Heart left ventricle (tissue), 16 donors: ENCODE measurements at regions of chr20 and their contacts with region 1.

Region 1: DNA sequence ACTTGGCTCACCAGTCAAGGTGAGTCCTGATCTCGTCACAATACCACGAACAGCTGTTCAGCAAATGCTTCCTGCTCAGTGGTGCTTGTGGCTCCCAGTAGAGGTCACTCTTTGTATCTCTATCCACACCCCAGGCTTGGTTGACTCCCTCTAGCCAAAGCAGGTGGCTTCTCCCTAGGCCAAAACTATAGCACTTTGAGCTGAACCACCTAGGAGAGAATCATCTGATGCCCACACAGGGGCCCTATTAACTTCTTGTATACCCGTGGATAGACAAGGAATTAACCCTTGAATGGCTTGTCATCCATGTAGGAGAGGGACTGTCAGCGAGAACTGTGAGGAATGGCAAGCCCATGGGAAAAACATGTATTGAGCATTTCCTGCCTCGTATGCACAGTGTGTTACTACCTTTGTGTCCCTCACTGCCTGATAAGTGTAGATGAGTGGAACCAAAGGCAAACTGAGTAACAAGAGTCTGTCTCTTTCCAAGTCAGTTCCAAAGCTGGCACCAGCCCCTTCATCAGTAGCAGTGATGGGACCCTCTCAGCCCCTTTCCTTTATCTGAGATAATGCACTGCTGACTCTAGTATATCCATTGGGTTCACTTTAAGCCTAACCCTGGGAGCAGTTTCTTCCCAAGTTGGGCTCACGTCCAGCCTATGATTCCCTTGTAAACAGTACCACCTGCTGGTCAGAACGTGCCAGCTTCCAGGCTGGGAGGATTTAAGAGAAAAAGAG is 42.5 kb downstream of the EIF2S2 start:
- DNase-seq: peak; percentile 50 to 74 (median 71)
- ATAC-seq: peak; percentile 72 to 91 (median 86)
- H3K4me3 ChIP-seq: no peak overlapping the region
- H3K27ac ChIP-seq: peak overlapping the region in 1 of 12 donors; percentile 7
- H3K4me1 ChIP-seq: peaks cover 0 to 50% (median 28%) of the 10 kb centered on the region in 12 donors
- H3K27me3 ChIP-seq: no peaks in the 10 kb centered on the region
- CTCF ChIP-seq: peak; percentile 75 to 93 (median 87)
- POLR2A ChIP-seq: no peak

Region 2: GRCh38 chr20:33862709-33863403 is 206.7 kb before region 1 on chr20:
- intact Hi-C with region 1: loop called (anchors 1 to 5 kb)
- DNase-seq: peak in 4 of 5 donors; percentile 33 to 53 (median 40)
- ATAC-seq: peak; percentile 55 to 83 (median 78)
- H3K4me3 ChIP-seq: peak overlapping the region in 5 of 12 donors; percentile 15 to 36 (median 16)
- H3K27ac ChIP-seq: no peak overlapping the region
- H3K4me1 ChIP-seq: peaks cover 0 to 25% (median 14%) of the 10 kb centered on the region in 12 donors
- H3K27me3 ChIP-seq: no peaks in the 10 kb centered on the region
- CTCF ChIP-seq: peak; percentile 49 to 76 (median 65)
- POLR2A ChIP-seq: no peak

Region 3: GRCh38 chr20:33933469-33933909 is 136.0 kb before region 1 on chr20:
- intact Hi-C with region 1: loop called in 9 of 10 experiments (anchors 1 to 5 kb)
- DNase-seq: peak; percentile 45 to 66 (median 61)
- ATAC-seq: peak; percentile 78 to 92 (median 92)
- H3K4me3 ChIP-seq: no peak overlapping the region
- H3K27ac ChIP-seq: peak overlapping the region in 5 of 12 donors; percentile 12 to 70 (median 30)
- H3K4me1 ChIP-seq: peaks cover 0 to 3% (median 0%) of the 10 kb centered on the region in 12 donors
- H3K27me3 ChIP-seq: no peaks in the 10 kb centered on the region
- CTCF ChIP-seq: peak; percentile 33 to 71 (median 53)
- POLR2A ChIP-seq: no peak

Region 4: DNA sequence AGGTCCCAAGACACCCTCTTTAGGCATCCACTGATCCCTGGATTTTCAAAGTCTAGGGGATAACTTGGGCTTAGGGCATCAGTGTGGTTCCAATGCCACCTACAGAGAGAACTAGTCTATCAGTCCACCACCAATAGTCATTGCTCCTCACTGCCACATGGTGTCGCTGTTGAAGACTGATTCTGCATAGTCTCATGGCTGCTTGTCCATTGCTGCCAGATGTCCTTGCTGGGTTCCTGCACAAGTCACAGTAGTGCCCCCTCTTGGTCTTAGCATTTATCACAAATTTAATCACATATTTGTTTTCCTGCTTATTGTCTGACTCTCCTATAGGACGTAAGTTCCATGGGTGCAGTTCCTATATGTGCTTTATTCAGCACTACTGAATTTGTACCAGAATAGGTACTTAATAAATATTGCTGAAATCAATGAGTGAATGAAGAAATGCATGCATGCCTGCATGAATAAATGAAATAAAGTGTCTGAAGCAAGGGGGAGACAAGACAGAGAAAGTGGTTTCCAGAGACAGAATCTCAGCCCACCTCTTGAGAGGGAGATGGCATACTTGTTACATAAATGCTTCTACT is 121.7 kb before region 1 on chr20:
- intact Hi-C with region 1: loop called in 2 of 10 experiments (anchors 5 kb)
- DNase-seq: no peak
- ATAC-seq: no peak
- H3K4me3 ChIP-seq: no peak overlapping the region
- H3K27ac ChIP-seq: no peak overlapping the region
- H3K4me1 ChIP-seq: no peaks in the 10 kb centered on the region
- H3K27me3 ChIP-seq: no peaks in the 10 kb centered on the region
- CTCF ChIP-seq: peak; percentile 24 to 51 (median 40)
- POLR2A ChIP-seq: no peak

Region 5: GRCh38 chr20:34143951-34144350 is 74.4 kb after region 1 on chr20:
- intact Hi-C with region 1: no loop called
- DNase-seq: no peak
- ATAC-seq: no peak
- H3K4me3 ChIP-seq: no peak overlapping the region
- H3K27ac ChIP-seq: no peak overlapping the region
- H3K4me1 ChIP-seq: no peaks in the 10 kb centered on the region
- H3K27me3 ChIP-seq: no peaks in the 10 kb centered on the region
- CTCF ChIP-seq: no peak
- POLR2A ChIP-seq: no peak